Activated CD8-positive, alpha-beta T cell treated with anti-CD3 and anti-CD28 coated beads for 36 hours (primary cell): ENCODE measurements at regions of chr4 and their contacts with region 1.

Region 1: GRCh38 chr4:72302981-72303704 is 265.9 kb downstream of the ADAMTS3 start:
- DNase-seq: peak; percentile 54
- ATAC-seq: peak; percentile 74
- H3K4me3 Mint-ChIP-seq: no peak overlapping the region
- H3K27ac Mint-ChIP-seq: no peak overlapping the region
- H3K4me1 Mint-ChIP-seq: no peaks in the 10 kb centered on the region
- H3K27me3 Mint-ChIP-seq: no peaks in the 10 kb centered on the region
- CTCF ChIP-seq: peak; percentile 81

Region 2: DNA sequence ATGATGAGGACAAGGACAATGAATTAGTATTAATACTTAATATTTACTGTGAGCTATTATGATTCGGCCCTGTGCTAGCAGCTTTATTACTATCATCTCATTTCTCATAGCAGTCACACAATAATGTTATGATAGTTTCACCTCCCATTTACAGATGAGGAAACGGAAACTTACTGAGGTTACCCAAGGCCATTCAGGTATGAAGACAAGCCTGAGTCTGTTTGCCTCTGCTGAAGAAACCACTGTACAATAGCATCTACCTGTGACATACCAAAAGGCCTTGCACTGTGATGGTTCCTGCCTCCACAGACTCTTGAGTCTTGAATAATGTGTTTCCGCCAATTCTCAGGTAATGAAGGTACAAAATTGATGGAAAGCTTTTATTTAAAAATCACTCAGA is 22.9 kb before region 1 on chr4:
- CTCF ChIA-PET with region 1: interaction called, 16 read pairs
- POLR2A ChIA-PET with region 1: no interaction called
- intact Hi-C with region 1: no loop called
- DNase-seq: no peak
- ATAC-seq: no peak
- H3K4me3 Mint-ChIP-seq: no peak overlapping the region
- H3K27ac Mint-ChIP-seq: no peak overlapping the region
- H3K4me1 Mint-ChIP-seq: no peaks in the 10 kb centered on the region
- H3K27me3 Mint-ChIP-seq: no peaks in the 10 kb centered on the region
- CTCF ChIP-seq: no peak

Region 3: GRCh38 chr4:72446353-72447055 is 143.4 kb after region 1 on chr4:
- CTCF ChIA-PET with region 1: no interaction called
- POLR2A ChIA-PET with region 1: no interaction called
- intact Hi-C with region 1: no loop called
- DNase-seq: no peak
- ATAC-seq: no peak
- H3K4me3 Mint-ChIP-seq: no peak overlapping the region
- H3K27ac Mint-ChIP-seq: no peak overlapping the region
- H3K4me1 Mint-ChIP-seq: no peaks in the 10 kb centered on the region
- H3K27me3 Mint-ChIP-seq: no peaks in the 10 kb centered on the region
- CTCF ChIP-seq: no peak